Colonic mucosa (tissue), 4 donors: ENCODE measurements at regions of chr14 and their contacts with region 1.

Region 1: DNA sequence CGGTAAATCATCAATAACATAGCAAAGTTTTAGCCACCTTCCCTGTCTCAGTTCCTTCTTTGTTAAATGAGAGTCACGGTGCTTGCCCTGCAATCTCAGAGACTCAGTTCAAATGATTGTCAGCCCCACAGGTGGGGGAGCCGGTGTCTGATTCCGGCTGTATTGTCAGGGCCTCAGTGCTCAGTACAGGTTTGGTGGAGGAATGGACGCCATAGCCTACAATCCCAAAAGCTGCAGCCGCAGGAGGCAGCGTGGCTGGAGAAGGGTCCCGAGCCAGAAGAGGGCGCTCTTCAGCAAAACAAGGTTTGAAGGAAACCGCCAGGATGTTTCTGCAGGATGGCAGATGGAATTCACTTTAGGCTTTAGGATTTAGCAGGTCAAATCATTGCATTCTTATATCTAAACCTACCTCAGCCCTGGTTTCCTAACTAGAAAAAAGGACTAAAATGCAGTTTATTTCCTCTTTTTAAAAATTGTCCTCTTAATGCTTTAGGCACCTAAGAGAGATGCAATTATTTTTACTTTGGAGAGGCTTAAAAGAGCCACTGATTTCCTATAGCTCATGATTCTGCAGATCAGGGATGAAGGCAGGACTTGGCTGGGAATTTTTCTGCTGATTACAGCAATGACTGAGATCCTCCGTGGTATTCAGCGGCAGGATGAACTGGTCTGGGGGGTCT is 29.2 kb downstream of the FOS start:
- DNase-seq: peak; percentile 94
- H3K4me3 ChIP-seq: no peak overlapping the region
- H3K27ac ChIP-seq: no peak overlapping the region
- H3K4me1 ChIP-seq: no peaks in the 10 kb centered on the region
- H3K27me3 ChIP-seq: no peaks in the 10 kb centered on the region
- CTCF ChIP-seq: peak; percentile 80

Region 2: GRCh38 chr14:74945823-74946682 is 361.8 kb before region 1 on chr14:
- intact Hi-C with region 1: loop called (anchors 10 kb)
- DNase-seq: peak; percentile 87
- H3K4me3 ChIP-seq: no peak overlapping the region
- H3K27ac ChIP-seq: no peak overlapping the region
- H3K4me1 ChIP-seq: peaks cover under 1% of the 10 kb centered on the region
- H3K27me3 ChIP-seq: no peaks in the 10 kb centered on the region
- CTCF ChIP-seq: peak; percentile 88

Region 3: GRCh38 chr14:75044322-75044721 is 263.5 kb before region 1 on chr14:
- intact Hi-C with region 1: no loop called
- DNase-seq: no peak
- H3K4me3 ChIP-seq: no peak overlapping the region
- H3K27ac ChIP-seq: no peak overlapping the region
- H3K4me1 ChIP-seq: peaks cover 7% of the 10 kb centered on the region
- H3K27me3 ChIP-seq: no peaks in the 10 kb centered on the region
- CTCF ChIP-seq: no peak

Region 4: DNA sequence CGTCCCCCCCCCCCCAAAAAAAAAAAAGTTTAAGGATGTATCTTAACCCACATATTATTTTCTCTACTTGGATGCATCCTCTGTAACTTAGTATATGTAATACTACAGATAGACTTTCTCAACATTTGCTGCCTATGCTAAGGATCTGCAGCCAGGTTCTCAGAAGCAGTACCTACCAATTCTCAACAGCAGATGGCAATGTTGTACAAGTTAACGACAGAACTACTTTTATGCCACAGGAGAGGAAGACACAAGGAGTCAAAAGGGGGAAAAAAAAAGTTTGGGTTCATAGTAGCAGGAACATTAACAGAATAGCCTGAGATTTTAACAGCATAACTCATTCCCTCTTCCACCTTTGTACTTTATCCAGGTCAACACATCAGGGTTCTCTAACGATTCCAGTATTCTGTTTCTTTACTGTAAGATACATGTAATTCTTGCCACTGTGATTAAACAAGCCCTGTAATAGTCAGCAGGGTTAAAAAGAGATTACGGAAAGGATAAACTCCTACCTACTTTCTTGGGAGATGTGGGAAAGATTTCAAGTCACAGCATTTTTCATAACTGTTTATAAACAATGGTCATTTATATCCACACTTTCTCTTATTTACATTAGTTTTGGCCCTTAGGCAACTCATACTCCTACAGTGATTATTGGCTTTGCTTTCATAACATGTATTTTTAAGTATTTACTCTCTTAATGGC is 175.3 kb before region 1 on chr14:
- intact Hi-C with region 1: loop called (anchors 2 kb)
- DNase-seq: peak; percentile 78
- H3K4me3 ChIP-seq: no peak overlapping the region
- H3K27ac ChIP-seq: peak overlapping the region; percentile 28
- H3K4me1 ChIP-seq: no peaks in the 10 kb centered on the region
- H3K27me3 ChIP-seq: no peaks in the 10 kb centered on the region
- CTCF ChIP-seq: peak; percentile 65

Region 5: GRCh38 chr14:75340921-75341320 is 33.1 kb after region 1 on chr14:
- intact Hi-C with region 1: no loop called
- DNase-seq: peak; percentile 65
- H3K4me3 ChIP-seq: no peak overlapping the region
- H3K27ac ChIP-seq: no peak overlapping the region
- H3K4me1 ChIP-seq: no peaks in the 10 kb centered on the region
- H3K27me3 ChIP-seq: no peaks in the 10 kb centered on the region
- CTCF ChIP-seq: no peak

Region 6: DNA sequence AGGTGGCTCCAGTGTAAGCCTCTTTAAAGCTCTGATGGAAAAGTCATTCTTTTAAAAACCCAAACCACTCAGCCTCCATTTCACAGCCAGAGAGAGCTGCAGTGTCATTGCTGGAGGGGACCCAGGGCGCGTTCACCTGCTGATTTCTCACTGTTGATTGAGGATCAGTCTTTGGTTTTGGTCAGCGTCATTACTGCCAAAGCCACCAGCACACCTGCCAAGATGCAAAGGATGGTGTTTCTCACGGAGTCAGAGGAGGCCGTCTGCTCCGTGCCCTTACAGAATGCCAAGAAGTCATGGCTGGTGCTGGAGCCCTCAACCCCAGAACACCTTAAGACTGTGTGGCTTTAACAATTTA is 181.6 kb after region 1 on chr14:
- intact Hi-C with region 1: loop called (anchors 2 kb)
- DNase-seq: no peak
- H3K4me3 ChIP-seq: no peak overlapping the region
- H3K27ac ChIP-seq: no peak overlapping the region
- H3K4me1 ChIP-seq: no peaks in the 10 kb centered on the region
- H3K27me3 ChIP-seq: no peaks in the 10 kb centered on the region
- CTCF ChIP-seq: no peak

Region 7: GRCh38 chr14:75560962-75561432 is 253.2 kb after region 1 on chr14:
- intact Hi-C with region 1: loop called (anchors 2 kb)
- DNase-seq: peak; percentile 81
- H3K4me3 ChIP-seq: no peak overlapping the region
- H3K27ac ChIP-seq: no peak overlapping the region
- H3K4me1 ChIP-seq: no peaks in the 10 kb centered on the region
- H3K27me3 ChIP-seq: no peaks in the 10 kb centered on the region
- CTCF ChIP-seq: peak; percentile 81